Activated CD8-positive, alpha-beta memory T cell treated with anti-CD3 and anti-CD28 coated beads, Interleukin-2, amount 10 ng/mL, durations not matched to agents 7 days and 5 days (primary cell): ENCODE measurements at regions of chr9 and their contacts with region 1.

Region 1: DNA sequence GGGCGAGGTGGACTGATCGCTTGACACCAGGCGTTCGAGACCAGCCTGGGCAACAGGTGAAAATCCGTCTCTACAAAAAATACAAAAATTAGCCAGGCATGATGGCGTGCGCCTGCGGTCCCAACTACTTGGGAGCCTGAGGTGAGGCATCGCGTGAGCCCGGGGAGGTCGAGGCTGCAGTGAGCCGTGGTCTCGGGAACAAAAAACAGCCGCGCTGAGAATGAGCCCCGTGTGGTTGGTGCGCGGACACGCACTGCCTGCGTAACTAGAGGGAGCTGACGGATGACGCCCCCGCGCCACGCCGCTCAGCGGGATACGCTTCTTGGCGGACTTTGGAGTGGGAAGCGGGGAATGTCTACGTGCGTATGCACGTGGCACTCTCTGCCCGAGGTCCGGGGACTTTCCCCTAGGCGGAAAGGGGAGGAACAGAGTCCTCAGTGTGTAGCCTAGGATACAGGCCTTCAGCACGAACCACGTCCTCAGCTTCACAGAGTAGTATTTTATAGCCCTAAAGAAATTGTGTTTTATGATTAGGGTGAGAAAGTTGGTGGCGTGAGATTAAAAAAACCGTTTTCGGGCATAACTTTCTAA is at the start of gene RMRP:
- DNase-seq: peak; percentile 95
- ATAC-seq: peak; percentile 92
- H3K4me3 Mint-ChIP-seq: peak within 1 kb of the TSS; percentile 84
- H3K27ac Mint-ChIP-seq: peak within 1 kb of the TSS; percentile 95
- H3K4me1 Mint-ChIP-seq: peaks cover 61% of the 10 kb centered on the region
- H3K27me3 Mint-ChIP-seq: peaks cover 4% of the 10 kb centered on the region
- total RNA-seq, gene RMRP: 6,751 to 13,083 TPM

Region 2: GRCh38 chr9:35690431-35691333 is 33.0 kb after region 1 on chr9:
- CTCF ChIA-PET with region 1: interaction called, 58 read pairs
- DNase-seq: peak; percentile 48
- ATAC-seq: peak; percentile 52
- H3K4me3 Mint-ChIP-seq: peak overlapping the region; percentile 74
- H3K27ac Mint-ChIP-seq: no peak overlapping the region
- H3K4me1 Mint-ChIP-seq: peaks cover 14% of the 10 kb centered on the region
- H3K27me3 Mint-ChIP-seq: no peaks in the 10 kb centered on the region